B cell (primary cell): ENCODE measurements at regions of chr16 and their contacts with region 1.

Region 1: GRCh38 chr16:56950881-56951771 is 10.6 kb upstream of the CETP start:
- DNase-seq: peak; percentile 92
- ATAC-seq: peak; percentile 84
- H3K4me3 ChIP-seq: peak overlapping the region in 1 of 5 experiments; percentile 1
- H3K4me3 Mint-ChIP-seq: peak overlapping the region; percentile 68
- H3K27ac ChIP-seq: peak overlapping the region; percentile 42 to 58
- H3K27ac Mint-ChIP-seq: peak overlapping the region; percentile 83
- H3K4me1 ChIP-seq: peaks cover 24 to 26% of the 10 kb centered on the region in 2 donors
- H3K4me1 Mint-ChIP-seq: peaks cover 41% of the 10 kb centered on the region
- H3K27me3 ChIP-seq: no peaks in the 10 kb centered on the region
- H3K27me3 Mint-ChIP-seq: no peaks in the 10 kb centered on the region
- CTCF ChIP-seq: peak; percentile 49

Region 2: GRCh38 chr16:56888806-56889205 is 62.3 kb before region 1 on chr16:
- CTCF ChIA-PET with region 1: interaction called, 3 read pairs
- POLR2A ChIA-PET with region 1: interaction called, 11 read pairs
- intact Hi-C with region 1: no loop called
- DNase-seq: peak; percentile 87
- ATAC-seq: peak; percentile 96
- H3K4me3 ChIP-seq: no peak overlapping the region
- H3K4me3 Mint-ChIP-seq: peak overlapping the region; percentile 53
- H3K27ac ChIP-seq: peak overlapping the region in 1 of 2 donors; percentile 39
- H3K27ac Mint-ChIP-seq: peak overlapping the region; percentile 79
- H3K4me1 ChIP-seq: peaks cover 6 to 18% of the 10 kb centered on the region in 2 donors
- H3K4me1 Mint-ChIP-seq: peaks cover 18% of the 10 kb centered on the region
- H3K27me3 ChIP-seq: no peaks in the 10 kb centered on the region
- H3K27me3 Mint-ChIP-seq: no peaks in the 10 kb centered on the region
- CTCF ChIP-seq: no peak

Region 3: DNA sequence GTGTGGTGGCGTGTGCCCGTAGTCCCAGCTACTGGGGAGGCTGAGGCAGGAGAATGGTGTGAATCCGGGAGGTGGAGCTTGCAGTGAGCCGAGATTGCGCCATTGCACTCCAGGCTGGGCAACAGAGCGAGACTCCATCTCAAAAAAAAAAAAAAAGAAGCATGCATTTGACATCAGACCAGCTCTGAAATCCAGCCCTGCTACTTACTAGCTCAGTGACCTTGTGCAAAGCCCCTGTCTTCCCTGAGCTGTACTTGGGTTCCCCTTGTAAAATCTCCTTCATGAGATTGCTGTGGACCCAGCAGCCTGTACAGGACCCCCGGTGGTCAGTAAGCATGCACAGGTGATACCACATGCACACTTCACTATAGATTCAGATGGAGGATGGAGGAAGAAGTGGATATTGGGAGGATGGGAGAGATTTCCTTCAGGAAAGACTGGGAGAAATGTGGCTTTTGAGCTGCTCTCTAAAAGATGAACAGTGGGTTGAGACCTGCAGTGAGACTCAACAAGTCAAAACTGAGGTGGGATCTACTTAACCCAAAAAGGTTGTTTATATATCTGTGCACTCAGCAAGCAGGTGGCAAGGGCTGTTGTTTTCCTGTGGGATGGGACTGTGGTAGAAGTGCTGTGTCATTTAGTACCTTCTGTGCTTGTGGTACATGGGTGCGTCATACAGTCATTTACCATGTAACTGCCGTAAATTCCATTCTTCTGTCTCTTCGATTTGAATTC is 12.5 kb before region 1 on chr16:
- CTCF ChIA-PET with region 1: interaction called, 18 read pairs
- POLR2A ChIA-PET with region 1: interaction called, 22 read pairs
- intact Hi-C with region 1: no loop called
- DNase-seq: no peak
- ATAC-seq: peak; percentile 22
- H3K4me3 ChIP-seq: no peak overlapping the region
- H3K4me3 Mint-ChIP-seq: peak overlapping the region; percentile 80
- H3K27ac ChIP-seq: peak overlapping the region in 1 of 2 donors; percentile 24
- H3K27ac Mint-ChIP-seq: peak overlapping the region; percentile 78
- H3K4me1 ChIP-seq: peaks cover 74 to 82% of the 10 kb centered on the region in 2 donors
- H3K4me1 Mint-ChIP-seq: peaks cover 79% of the 10 kb centered on the region
- H3K27me3 ChIP-seq: no peaks in the 10 kb centered on the region
- H3K27me3 Mint-ChIP-seq: no peaks in the 10 kb centered on the region
- CTCF ChIP-seq: no peak

Region 4: DNA sequence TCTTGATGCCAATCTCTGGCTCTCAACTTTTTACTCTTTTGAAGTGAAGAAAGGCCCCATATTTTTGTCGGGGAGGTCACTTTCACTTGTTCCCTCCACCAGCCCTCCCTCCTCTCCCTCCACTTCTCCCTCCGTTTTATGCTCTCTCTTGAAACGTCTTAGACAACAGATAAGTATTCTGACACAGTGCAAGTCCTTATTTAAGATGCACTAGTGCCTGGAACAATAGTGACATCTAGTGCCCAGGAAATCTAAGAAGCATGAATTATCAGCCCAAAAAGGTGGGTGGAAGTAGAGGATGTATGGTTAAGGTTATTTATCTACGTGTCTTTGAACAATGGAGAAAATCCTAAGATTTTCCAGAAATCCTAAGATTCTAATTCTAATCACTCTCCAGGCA is 216.8 kb after region 1 on chr16:
- CTCF ChIA-PET with region 1: no interaction called
- POLR2A ChIA-PET with region 1: no interaction called
- intact Hi-C with region 1: no loop called
- DNase-seq: peak; percentile 73
- ATAC-seq: peak; percentile 60
- H3K4me3 ChIP-seq: no peak overlapping the region
- H3K4me3 Mint-ChIP-seq: no peak overlapping the region
- H3K27ac ChIP-seq: no peak overlapping the region
- H3K27ac Mint-ChIP-seq: no peak overlapping the region
- H3K4me1 ChIP-seq: no peaks in the 10 kb centered on the region
- H3K4me1 Mint-ChIP-seq: peaks cover 8% of the 10 kb centered on the region
- H3K27me3 ChIP-seq: no peaks in the 10 kb centered on the region
- H3K27me3 Mint-ChIP-seq: no peaks in the 10 kb centered on the region
- CTCF ChIP-seq: peak; percentile 73